ENCODE measurements at regions of chr7 and their contacts with region 1.

Region 1: GRCh38 chr7:32218154-32218467 is 147.9 kb upstream of the PDE1C start:
- DNase-seq: peak; percentile 64
- H3K4me3 ChIP-seq: no peak overlapping the region
- H3K27ac ChIP-seq: no peak overlapping the region
- H3K4me1 ChIP-seq: no peaks in the 10 kb centered on the region
- H3K27me3 ChIP-seq: peaks cover 0 to 4% (median 0%) of the 10 kb centered on the region in 4 donors
- CTCF ChIP-seq: no peak
- EP300 ChIP-seq: no peak
- POLR2A ChIP-seq: no peak

Region 2: DNA sequence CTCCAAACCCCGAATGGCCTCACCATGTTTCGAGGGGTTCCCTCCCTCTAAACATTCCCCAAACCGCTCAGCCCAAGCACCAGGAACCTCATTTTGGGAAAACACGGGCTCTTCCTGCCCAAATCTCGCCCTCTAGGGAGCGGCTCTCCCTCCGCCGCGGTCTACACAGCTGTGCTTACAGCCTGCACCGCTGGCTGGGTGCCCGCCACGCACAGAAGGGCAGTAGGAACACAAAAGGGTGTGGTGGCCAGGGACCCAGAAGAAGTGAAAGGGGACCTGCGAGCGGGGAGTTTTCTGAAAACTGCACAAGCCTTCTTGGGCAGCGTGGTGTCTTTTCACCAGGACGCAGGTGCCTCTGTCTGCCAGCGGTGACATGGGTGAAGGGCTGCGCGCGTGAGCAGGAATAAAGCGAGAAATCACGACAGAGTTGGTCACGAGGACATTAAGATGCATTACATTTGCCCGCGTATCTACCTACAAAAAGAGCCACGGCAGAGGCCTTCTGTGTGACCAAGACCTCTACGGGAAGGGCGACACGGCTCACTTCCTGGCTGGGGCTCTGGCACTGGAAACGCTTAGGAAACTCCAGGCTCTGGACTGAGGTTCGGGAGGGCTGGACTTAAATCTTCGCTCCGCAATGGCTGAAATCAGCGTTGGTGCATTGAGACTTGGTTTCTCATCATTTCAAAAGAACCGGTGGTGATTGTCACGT is 100.3 kb after region 1 on chr7:
- intact Hi-C with region 1: no loop called
- DNase-seq: no peak
- H3K4me3 ChIP-seq: peak overlapping the region; percentile 25 to 47 (median 40)
- H3K27ac ChIP-seq: no peak overlapping the region
- H3K4me1 ChIP-seq: peaks cover 0 to 12% (median 10%) of the 10 kb centered on the region in 4 donors
- H3K27me3 ChIP-seq: peaks cover 0 to 34% (median 0%) of the 10 kb centered on the region in 4 donors
- CTCF ChIP-seq: no peak
- EP300 ChIP-seq: no peak
- POLR2A ChIP-seq: no peak

Region 3: GRCh38 chr7:32347244-32347828 is 129.2 kb after region 1 on chr7:
- intact Hi-C with region 1: loop called (anchors 10 kb)
- DNase-seq: no peak
- H3K4me3 ChIP-seq: no peak overlapping the region
- H3K27ac ChIP-seq: no peak overlapping the region
- H3K4me1 ChIP-seq: no peaks in the 10 kb centered on the region
- H3K27me3 ChIP-seq: no peaks in the 10 kb centered on the region
- CTCF ChIP-seq: peak; percentile 37 to 70 (median 58)
- EP300 ChIP-seq: no peak
- POLR2A ChIP-seq: no peak